CD8-positive, alpha-beta T cell (primary cell): ENCODE measurements at regions of chr7 and their contacts with region 1.

Region 1: GRCh38 chr7:134432296-134433152 is 26.4 kb downstream of the AKR1B1 start:
- DNase-seq: peak; percentile 32 to 89 (median 71)
- ATAC-seq: peak; percentile 88
- H3K4me3 ChIP-seq: peak overlapping the region; percentile 24 to 37
- H3K4me3 Mint-ChIP-seq: peak overlapping the region; percentile 78
- H3K27ac ChIP-seq: peak overlapping the region; percentile 11 to 69
- H3K27ac Mint-ChIP-seq: peak overlapping the region; percentile 77
- H3K4me1 ChIP-seq: peaks cover 4% of the 10 kb centered on the region
- H3K4me1 Mint-ChIP-seq: peaks cover 16% of the 10 kb centered on the region
- H3K27me3 ChIP-seq: no peaks in the 10 kb centered on the region
- H3K27me3 Mint-ChIP-seq: no peaks in the 10 kb centered on the region
- CTCF ChIP-seq: peak; percentile 52

Region 2: GRCh38 chr7:134316539-134317344 is 115.8 kb before region 1 on chr7 and contains the start of gene SLC35B4:
- CTCF ChIA-PET with region 1: interaction called, 3 read pairs
- POLR2A ChIA-PET with region 1: no interaction called
- intact Hi-C with region 1: loop called in 1 of 2 experiments (anchors 1 kb)
- DNase-seq: peak; percentile 88 to 97 (median 94)
- ATAC-seq: peak; percentile 97
- H3K4me3 ChIP-seq: peak within 1 kb of the TSS; percentile 88 to 98
- H3K4me3 Mint-ChIP-seq: peak within 1 kb of the TSS; percentile 97
- H3K27ac ChIP-seq: peak within 1 kb of the TSS; percentile 58 to 72
- H3K27ac Mint-ChIP-seq: peak within 1 kb of the TSS; percentile 92
- H3K4me1 ChIP-seq: peaks cover 14% of the 10 kb centered on the region
- H3K4me1 Mint-ChIP-seq: peaks cover 25% of the 10 kb centered on the region
- H3K27me3 ChIP-seq: no peaks in the 10 kb centered on the region
- H3K27me3 Mint-ChIP-seq: peaks cover 3% of the 10 kb centered on the region
- CTCF ChIP-seq: peak; percentile 29
- total RNA-seq, gene SLC35B4: 5.1 to 7.0 TPM

Region 3: DNA sequence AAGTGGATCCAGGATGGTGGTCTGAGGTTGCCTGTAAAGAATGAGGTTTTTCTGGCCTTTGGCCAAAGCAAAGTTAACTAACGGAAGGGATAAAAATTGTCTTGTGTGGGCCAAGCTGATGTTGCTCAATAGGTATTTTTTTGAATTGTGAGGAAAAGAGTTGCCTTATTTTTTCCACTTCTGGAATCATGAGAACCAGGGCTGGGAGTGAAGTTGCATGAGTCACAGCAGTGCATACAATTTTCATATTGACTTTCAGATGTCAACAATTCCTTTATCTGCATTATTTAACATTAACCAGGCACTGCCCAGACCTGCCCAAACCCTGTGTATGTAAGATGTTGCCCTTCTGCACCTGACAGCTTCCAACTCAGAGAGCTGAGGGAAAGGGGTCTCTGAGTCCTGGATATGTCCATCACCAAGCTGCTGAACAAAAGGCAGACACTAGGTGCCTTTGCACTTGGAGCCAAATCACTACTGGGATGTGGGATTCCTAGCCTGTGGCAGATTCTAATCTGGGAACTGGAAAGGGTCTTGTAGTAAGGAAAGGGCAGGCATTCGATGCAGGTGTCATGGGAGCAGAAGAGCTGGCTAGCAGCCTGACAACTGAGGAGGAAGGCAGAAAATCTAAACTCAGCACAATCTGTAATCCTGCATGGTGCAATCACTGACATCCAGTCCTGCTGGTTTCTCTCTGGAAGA is 63.5 kb before region 1 on chr7:
- CTCF ChIA-PET with region 1: no interaction called
- POLR2A ChIA-PET with region 1: no interaction called
- intact Hi-C with region 1: no loop called
- DNase-seq: no peak
- ATAC-seq: no peak
- H3K4me3 ChIP-seq: no peak overlapping the region
- H3K4me3 Mint-ChIP-seq: no peak overlapping the region
- H3K27ac ChIP-seq: no peak overlapping the region
- H3K27ac Mint-ChIP-seq: no peak overlapping the region
- H3K4me1 ChIP-seq: no peaks in the 10 kb centered on the region
- H3K4me1 Mint-ChIP-seq: no peaks in the 10 kb centered on the region
- H3K27me3 ChIP-seq: no peaks in the 10 kb centered on the region
- H3K27me3 Mint-ChIP-seq: peaks cover 38% of the 10 kb centered on the region
- CTCF ChIP-seq: no peak

Region 4: DNA sequence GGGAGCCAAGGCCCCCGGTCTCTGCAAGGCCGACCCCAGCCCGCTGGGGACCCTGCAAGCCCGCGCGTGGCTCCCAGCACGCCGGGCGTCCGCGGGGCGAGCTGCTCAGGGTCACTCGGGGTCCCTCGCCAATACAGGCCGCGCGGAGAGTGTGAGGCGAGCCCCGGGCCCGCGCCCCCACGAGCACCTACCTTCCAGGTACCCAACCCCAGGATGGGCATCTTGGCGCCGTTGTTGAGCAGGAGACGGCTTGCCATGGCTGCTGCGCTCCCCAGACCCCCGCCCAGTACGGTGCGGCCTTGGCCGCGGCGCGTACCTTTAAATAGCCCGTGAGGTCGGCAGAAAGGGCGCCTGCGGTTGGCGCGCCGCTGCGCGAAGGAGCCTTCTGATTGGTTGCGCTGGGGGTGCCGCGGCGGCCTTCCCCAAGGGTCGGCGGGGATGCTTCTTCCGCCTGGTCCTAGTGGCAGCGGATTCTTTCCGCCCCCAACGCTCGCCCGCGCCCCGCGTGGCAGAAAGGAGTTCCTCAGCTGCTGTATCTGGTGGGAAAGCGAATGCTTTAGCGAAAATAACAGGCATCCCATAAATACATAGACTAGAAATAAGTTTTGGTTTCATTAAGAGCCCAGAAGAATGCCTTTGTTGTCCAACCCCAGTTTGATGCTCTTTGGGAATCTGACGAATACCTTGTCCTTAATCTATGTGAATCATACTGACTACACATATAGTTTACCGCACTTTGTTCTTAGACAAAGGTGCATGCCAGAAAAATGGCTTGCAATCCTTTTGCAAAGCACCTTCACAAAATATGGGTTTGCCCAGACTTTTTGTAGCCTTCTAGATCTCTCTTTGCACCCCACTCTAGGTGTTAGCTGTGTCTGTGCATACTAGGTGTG is 26.5 kb after region 1 on chr7 and contains the start of gene AKR1B1:
- CTCF ChIA-PET with region 1: interaction called, 11 read pairs
- POLR2A ChIA-PET with region 1: interaction called, 13 read pairs
- intact Hi-C with region 1: loop called in 1 of 2 experiments (anchors 1 kb)
- DNase-seq: peak; percentile 75 to 93 (median 87)
- ATAC-seq: peak; percentile 88
- H3K4me3 ChIP-seq: peak within 1 kb of the TSS; percentile 75 to 85
- H3K4me3 Mint-ChIP-seq: peak within 1 kb of the TSS; percentile 83
- H3K27ac ChIP-seq: peak within 1 kb of the TSS; percentile 63 to 74
- H3K27ac Mint-ChIP-seq: peak within 1 kb of the TSS; percentile 76
- H3K4me1 ChIP-seq: peaks cover 36% of the 10 kb centered on the region
- H3K4me1 Mint-ChIP-seq: peaks cover 47% of the 10 kb centered on the region
- H3K27me3 ChIP-seq: no peaks in the 10 kb centered on the region
- H3K27me3 Mint-ChIP-seq: no peaks in the 10 kb centered on the region
- CTCF ChIP-seq: peak; percentile 72
- total RNA-seq, gene AKR1B1: 63.9 to 67.6 TPM

Region 5: GRCh38 chr7:134514663-134515062 is 82.1 kb after region 1 on chr7:
- CTCF ChIA-PET with region 1: interaction called, 39 read pairs
- POLR2A ChIA-PET with region 1: interaction called, 4 read pairs
- intact Hi-C with region 1: loop called (anchors 1 kb)
- DNase-seq: peak in 3 of 9 experiments; percentile 33 to 75 (median 70)
- ATAC-seq: peak; percentile 57
- H3K4me3 ChIP-seq: no peak overlapping the region
- H3K4me3 Mint-ChIP-seq: no peak overlapping the region
- H3K27ac ChIP-seq: no peak overlapping the region
- H3K27ac Mint-ChIP-seq: no peak overlapping the region
- H3K4me1 ChIP-seq: no peaks in the 10 kb centered on the region
- H3K4me1 Mint-ChIP-seq: peaks cover 4% of the 10 kb centered on the region
- H3K27me3 ChIP-seq: peaks cover 0 to 2% of the 10 kb centered on the region in 2 experiments
- H3K27me3 Mint-ChIP-seq: peaks cover 3% of the 10 kb centered on the region
- CTCF ChIP-seq: peak; percentile 88

Region 6: GRCh38 chr7:134605973-134606923 is 173.7 kb after region 1 on chr7:
- CTCF ChIA-PET with region 1: interaction called, 47 read pairs
- POLR2A ChIA-PET with region 1: no interaction called
- intact Hi-C with region 1: loop called (anchors 1 kb)
- DNase-seq: peak; percentile 25 to 75 (median 60)
- ATAC-seq: peak; percentile 89
- H3K4me3 ChIP-seq: no peak overlapping the region
- H3K4me3 Mint-ChIP-seq: peak overlapping the region; percentile 29
- H3K27ac ChIP-seq: no peak overlapping the region
- H3K27ac Mint-ChIP-seq: no peak overlapping the region
- H3K4me1 ChIP-seq: no peaks in the 10 kb centered on the region
- H3K4me1 Mint-ChIP-seq: peaks cover 5% of the 10 kb centered on the region
- H3K27me3 ChIP-seq: peaks cover 0 to 4% of the 10 kb centered on the region in 2 experiments
- H3K27me3 Mint-ChIP-seq: peaks cover 28% of the 10 kb centered on the region
- CTCF ChIP-seq: peak; percentile 95

Region 7: DNA sequence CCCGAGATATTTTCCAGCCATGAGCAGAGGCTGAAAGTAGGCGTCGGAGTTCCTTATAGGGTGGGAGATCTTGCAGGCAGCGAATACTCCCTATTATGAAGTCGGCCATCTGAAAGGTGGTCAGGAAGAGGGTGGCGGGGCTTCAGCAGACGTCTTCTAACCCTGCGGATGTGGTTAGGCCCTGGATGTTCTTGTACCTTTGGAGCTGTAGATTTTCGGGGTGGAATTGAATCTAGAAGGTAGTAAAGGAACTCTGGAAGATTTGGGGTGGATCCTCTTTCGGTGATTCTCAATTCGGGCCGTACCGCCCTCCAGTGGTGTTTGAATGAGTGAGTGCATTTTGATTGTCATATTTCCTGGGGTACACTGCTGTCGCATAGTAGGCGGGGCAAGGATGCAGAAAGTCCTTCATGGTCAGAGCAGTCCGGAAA is 1125.8 kb after region 1 on chr7:
- CTCF ChIA-PET with region 1: no interaction called
- POLR2A ChIA-PET with region 1: no interaction called
- intact Hi-C with region 1: loop called in 1 of 2 experiments (anchors 5 kb)
- DNase-seq: peak; percentile 37 to 87 (median 68)
- ATAC-seq: peak; percentile 52
- H3K4me3 ChIP-seq: peak overlapping the region; percentile 85 to 86
- H3K4me3 Mint-ChIP-seq: no peak overlapping the region
- H3K27ac ChIP-seq: peak overlapping the region; percentile 90 to 98
- H3K27ac Mint-ChIP-seq: no peak overlapping the region
- H3K4me1 ChIP-seq: peaks cover 16% of the 10 kb centered on the region
- H3K4me1 Mint-ChIP-seq: peaks cover 17% of the 10 kb centered on the region
- H3K27me3 ChIP-seq: no peaks in the 10 kb centered on the region
- H3K27me3 Mint-ChIP-seq: no peaks in the 10 kb centered on the region
- CTCF ChIP-seq: peak; percentile 52